ENCODE measurements at regions of chr17 and their contacts with region 1.

Region 1: DNA sequence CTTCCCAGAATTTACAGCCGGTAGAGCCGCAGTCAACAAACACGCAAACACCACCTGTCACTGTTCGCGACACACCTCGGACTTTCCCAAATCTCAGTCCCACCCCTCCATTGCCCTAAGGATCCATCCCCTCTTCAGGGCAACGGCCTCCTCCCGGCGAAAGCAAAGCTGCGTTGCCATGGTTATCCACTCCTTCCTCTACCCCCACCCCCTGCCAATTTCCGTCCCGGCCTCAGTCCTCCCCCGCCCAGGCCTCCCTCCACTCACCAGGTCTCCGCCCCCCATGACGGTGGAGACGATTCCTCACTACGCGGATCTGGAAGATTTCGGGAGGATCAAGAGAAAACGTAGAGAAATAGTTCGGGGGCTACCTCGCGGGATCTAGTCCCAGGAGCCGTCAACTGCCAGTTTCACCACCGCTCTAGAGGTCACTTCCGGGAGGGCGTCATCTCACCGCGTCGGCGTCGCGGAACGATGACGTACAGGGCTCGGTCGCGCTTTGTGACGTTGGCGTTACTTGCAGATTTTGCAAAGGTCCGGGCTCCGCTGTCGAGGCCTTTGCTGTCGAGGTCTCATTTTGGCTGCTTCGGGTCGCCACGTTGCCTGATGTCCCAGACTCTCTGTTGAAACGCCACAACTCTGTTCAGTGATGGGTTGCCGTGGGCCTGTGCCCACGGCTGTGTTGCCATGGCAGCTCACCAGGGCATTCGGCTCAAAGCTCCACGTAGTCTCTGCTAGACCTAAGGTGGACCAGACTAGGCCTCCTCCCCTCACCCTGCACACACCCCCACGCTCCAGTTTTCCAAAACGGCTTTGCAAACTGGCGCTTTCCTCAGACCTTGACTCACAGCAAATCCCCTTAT is at the start of gene CWC25:
- DNase-seq: peak; percentile 92
- H3K4me3 Mint-ChIP-seq: peak within 1 kb of the TSS; percentile 98
- H3K27ac Mint-ChIP-seq: peak within 1 kb of the TSS; percentile 100
- H3K4me1 Mint-ChIP-seq: no peaks in the 10 kb centered on the region
- H3K27me3 Mint-ChIP-seq: no peaks in the 10 kb centered on the region
- CTCF ChIP-seq: no peak
- total RNA-seq, gene CWC25: 21.9 and 23.4 TPM in 2 replicates

Region 2: DNA sequence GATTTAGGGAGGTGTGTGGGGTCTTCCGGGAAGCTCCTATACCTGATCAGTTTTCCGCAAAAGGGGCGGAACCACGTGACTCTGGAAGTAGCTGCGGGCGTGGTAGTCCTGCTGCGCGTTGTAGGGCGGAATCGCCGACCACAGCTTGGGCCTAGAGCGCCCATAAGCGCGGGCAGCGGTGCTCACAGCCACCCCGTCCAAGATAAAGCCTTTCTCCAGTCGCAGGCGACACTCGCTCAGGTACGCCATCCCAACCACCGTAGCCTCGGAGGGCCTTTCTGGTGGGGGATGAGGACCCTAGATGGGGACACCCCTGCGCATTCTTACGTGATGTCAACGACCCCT is 16.0 kb after region 1 on chr17:
- CTCF ChIA-PET with region 1: no interaction called
- POLR2A ChIA-PET with region 1: interaction called, 12 read pairs
- intact Hi-C with region 1: no loop called
- DNase-seq: no peak
- H3K4me3 Mint-ChIP-seq: no peak overlapping the region
- H3K27ac Mint-ChIP-seq: no peak overlapping the region
- H3K4me1 Mint-ChIP-seq: peaks cover 5% of the 10 kb centered on the region
- H3K27me3 Mint-ChIP-seq: no peaks in the 10 kb centered on the region
- CTCF ChIP-seq: no peak